ENCODE measurements at regions of chr22 and their contacts with region 1.

Region 1: GRCh38 chr22:50507991-50508884 is at the start of gene NCAPH2:
- DNase-seq: peak; percentile 89 to 99
- H3K4me3 ChIP-seq: peak within 1 kb of the TSS; percentile 83 to 100 (median 90)
- H3K27ac ChIP-seq: peak within 1 kb of the TSS; percentile 99
- H3K4me1 ChIP-seq: peaks cover 2 to 8% (median 5%) of the 10 kb centered on the region in 4 experiments
- H3K27me3 ChIP-seq: no peaks in the 10 kb centered on the region
- CTCF ChIP-seq: no peak
- EP300 ChIP-seq: peak in 1 of 2 experiments; percentile 44; a peak in 1 of 3 replicates
- POLR2A ChIP-seq: peak in 1 of 2 experiments; percentile 96; a peak in 2 of 3 replicates
- RAD21 ChIP-seq: no peak
- total RNA-seq, gene NCAPH2: 62.2 and 70.4 TPM in 2 replicates

Region 2: GRCh38 chr22:50481440-50482106 is 26.7 kb before region 1 on chr22 and contains the start of gene ADM2:
- CTCF ChIA-PET with region 1: interaction called, 4 read pairs
- POLR2A ChIA-PET with region 1: interaction called, 21 read pairs
- DNase-seq: peak in 1 of 2 experiments; percentile 89
- H3K4me3 ChIP-seq: peak within 1 kb of the TSS; percentile 50 to 74 (median 58)
- H3K27ac ChIP-seq: no peak within 1 kb of the TSS
- H3K4me1 ChIP-seq: peaks cover 0 to 5% (median 0%) of the 10 kb centered on the region in 4 experiments; a peak in 3 of 7 replicates
- H3K27me3 ChIP-seq: peaks cover 1 to 22% (median 13%) of the 10 kb centered on the region in 4 experiments; a peak in 6 of 7 replicates
- CTCF ChIP-seq: no peak
- EP300 ChIP-seq: no peak
- POLR2A ChIP-seq: no peak; a peak in 1 of 3 replicates
- RAD21 ChIP-seq: no peak
- total RNA-seq, gene ADM2: 7.5 and 8.0 TPM in 2 replicates

Region 3: DNA sequence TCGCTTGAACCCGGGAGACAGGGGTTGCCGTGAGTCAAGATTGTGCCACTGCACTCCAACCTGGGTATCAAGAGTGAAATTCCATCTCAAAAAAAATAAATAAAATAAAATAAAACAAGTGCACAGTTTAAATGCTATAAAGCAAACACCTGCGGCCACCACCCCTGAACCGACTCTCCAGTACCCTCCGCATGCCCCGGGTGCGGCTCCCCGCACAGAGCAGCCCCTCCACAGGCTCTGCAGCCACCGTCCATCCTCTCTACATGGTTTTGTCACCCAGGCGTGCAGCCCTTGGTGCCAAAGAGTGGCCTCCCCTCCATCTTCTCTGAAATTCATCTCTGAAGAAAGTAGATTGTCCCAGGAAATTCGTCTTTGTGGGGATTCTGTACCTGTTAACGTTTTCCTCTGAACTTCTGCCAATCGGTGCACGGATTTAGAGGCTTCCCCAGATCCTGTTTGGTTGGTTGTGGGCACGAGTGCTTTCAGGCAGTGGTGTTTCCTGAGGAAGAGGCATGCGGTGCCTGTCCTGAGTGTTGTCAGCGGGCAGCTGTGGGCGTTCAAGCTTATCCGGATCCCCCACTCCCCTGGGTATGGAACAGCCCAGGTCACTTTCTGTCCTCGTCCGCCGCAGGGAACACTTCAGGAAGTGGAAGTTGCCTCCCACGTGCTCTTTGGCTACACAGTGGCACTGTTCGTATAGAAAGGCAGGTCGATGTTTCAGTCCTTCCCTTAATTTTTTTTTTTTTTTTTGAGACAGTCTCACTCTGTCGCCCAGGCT is 17.5 kb before region 1 on chr22:
- CTCF ChIA-PET with region 1: interaction called, 11 read pairs
- POLR2A ChIA-PET with region 1: interaction called, 21 read pairs
- DNase-seq: no peak
- H3K4me3 ChIP-seq: no peak overlapping the region
- H3K27ac ChIP-seq: no peak overlapping the region
- H3K4me1 ChIP-seq: no peaks in the 10 kb centered on the region; a peak in 1 of 7 replicates
- H3K27me3 ChIP-seq: peaks cover 0 to 2% (median 0%) of the 10 kb centered on the region in 4 experiments; a peak in 1 of 7 replicates
- CTCF ChIP-seq: no peak
- EP300 ChIP-seq: no peak
- POLR2A ChIP-seq: no peak
- RAD21 ChIP-seq: no peak

Region 4: GRCh38 chr22:50525390-50526068 is 17.3 kb after region 1 on chr22 and contains the start of gene SCO2:
- CTCF ChIA-PET with region 1: interaction called, 6 read pairs
- POLR2A ChIA-PET with region 1: interaction called, 32 read pairs
- DNase-seq: peak; percentile 89 to 96
- H3K4me3 ChIP-seq: peak within 1 kb of the TSS; percentile 63 to 78 (median 67)
- H3K27ac ChIP-seq: no peak within 1 kb of the TSS; the same call in 1 of the 2 replicates
- H3K4me1 ChIP-seq: peaks cover 0 to 16% (median 7%) of the 10 kb centered on the region in 4 experiments; a peak in 5 of 7 replicates
- H3K27me3 ChIP-seq: peaks cover 23 to 39% (median 33%) of the 10 kb centered on the region in 4 experiments
- CTCF ChIP-seq: peak; percentile 49 to 61 (median 52)
- EP300 ChIP-seq: no peak
- POLR2A ChIP-seq: 0 out of 3 replicates have a peak, but pooled peaks of 1 of the 2 experiments have one; percentile 33
- RAD21 ChIP-seq: peak; percentile 32 to 51; a peak in 3 of 4 replicates
- total RNA-seq, gene SCO2: 2.2 TPM in 1 of 2 replicates, not detected in the other